Gastrocnemius medialis (tissue), 4 donors: ENCODE measurements at regions of chr6 and their contacts with region 1.

Region 1: DNA sequence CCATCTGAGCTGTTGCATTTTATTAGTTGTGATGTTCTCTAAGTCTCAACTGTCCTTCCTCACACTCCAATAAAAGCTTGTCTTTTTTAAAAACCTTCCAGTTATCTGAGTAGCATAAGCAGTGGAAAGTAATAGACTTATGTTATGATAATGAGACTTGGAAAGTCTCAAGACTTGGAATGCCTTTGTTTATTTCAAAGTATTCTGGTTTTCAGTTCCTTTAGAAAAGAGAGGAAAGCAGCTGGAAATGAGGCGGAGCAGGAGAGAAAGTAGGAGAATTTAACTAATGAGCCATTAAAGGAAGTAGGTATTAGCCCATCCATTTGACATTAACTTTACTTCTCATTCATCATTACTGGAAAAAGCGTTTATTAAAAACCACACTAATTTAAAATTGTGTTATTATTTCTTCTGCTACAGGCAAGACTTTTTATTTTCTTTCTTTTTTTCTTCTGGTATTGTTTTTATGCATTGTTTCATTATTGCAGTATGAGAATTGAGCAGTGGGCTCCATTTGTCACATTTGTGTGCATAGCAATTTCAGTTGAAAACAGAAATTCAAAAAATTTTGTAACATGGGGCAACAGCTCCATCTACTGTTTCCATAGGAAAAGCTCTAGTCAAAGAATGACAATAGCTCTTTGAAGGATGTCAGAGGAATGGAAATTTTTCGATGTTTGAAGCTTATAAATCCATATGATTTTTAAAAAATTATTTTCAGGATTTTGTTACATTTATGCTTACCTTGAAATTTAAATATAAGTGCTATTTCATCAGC is 194.8 kb downstream of the COL9A1 start:
- DNase-seq: no peak
- ATAC-seq: no peak
- H3K4me3 ChIP-seq: no peak overlapping the region
- H3K27ac ChIP-seq: no peak overlapping the region
- H3K4me1 ChIP-seq: no peaks in the 10 kb centered on the region
- H3K27me3 ChIP-seq: no peaks in the 10 kb centered on the region
- CTCF ChIP-seq: peak in 4 of 5 experiments; percentile 21 to 65 (median 54)
- POLR2A ChIP-seq: no peak

Region 2: GRCh38 chr6:69719602-69720193 is 388.3 kb before region 1 on chr6:
- in situ Hi-C with region 1: loop called in 1 of 4 experiments (anchors 25 kb)
- intact Hi-C with region 1: no loop called
- DNase-seq: no peak
- ATAC-seq: no peak
- H3K4me3 ChIP-seq: no peak overlapping the region
- H3K27ac ChIP-seq: no peak overlapping the region
- H3K4me1 ChIP-seq: no peaks in the 10 kb centered on the region
- H3K27me3 ChIP-seq: no peaks in the 10 kb centered on the region
- CTCF ChIP-seq: no peak
- POLR2A ChIP-seq: no peak

Region 3: DNA sequence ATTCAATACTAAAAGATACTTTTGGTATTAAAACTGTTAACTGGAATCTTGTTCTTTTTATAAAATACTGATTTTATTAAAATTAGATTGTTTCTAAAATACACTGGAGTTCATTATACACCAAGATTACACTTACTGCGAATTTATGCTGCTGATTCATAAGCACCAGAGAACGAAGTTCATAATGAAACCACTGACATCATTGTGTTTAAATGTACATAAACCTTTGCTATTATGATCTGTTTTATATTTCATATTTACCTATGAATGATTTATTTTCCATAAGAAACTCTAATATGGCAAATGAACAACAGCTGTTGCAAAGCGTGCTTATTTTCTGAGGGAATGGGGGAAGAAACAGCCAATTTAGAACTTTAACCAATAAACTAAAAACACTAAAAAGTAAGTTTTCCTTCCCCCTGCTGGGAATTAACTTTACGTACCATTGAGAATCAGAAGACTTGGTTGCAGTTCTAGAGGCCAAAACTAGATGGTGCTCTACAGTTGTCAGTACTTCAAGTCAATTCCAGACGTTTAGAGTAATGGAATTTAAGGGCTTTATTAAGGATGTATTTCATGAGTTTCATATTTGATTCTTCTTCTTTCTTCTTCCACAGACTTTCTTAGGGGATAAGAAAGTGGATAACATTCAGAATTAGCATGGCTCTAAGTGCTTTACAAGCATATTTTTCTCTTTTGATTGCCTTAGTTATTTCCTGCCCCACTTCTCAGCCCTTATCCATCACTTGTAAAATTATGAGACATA is 272.4 kb before region 1 on chr6:
- in situ Hi-C with region 1: loop called (anchors 5 to 25 kb)
- intact Hi-C with region 1: loop called (anchors 1 kb)
- DNase-seq: no peak
- ATAC-seq: peak; percentile 72 to 73
- H3K4me3 ChIP-seq: no peak overlapping the region
- H3K27ac ChIP-seq: no peak overlapping the region
- H3K4me1 ChIP-seq: peaks cover 0 to 5% of the 10 kb centered on the region in 2 donors
- H3K27me3 ChIP-seq: no peaks in the 10 kb centered on the region
- CTCF ChIP-seq: peak; percentile 35 to 80 (median 50)
- POLR2A ChIP-seq: no peak

Region 4: GRCh38 chr6:69985180-69985579 is 122.9 kb before region 1 on chr6:
- in situ Hi-C with region 1: no loop called
- intact Hi-C with region 1: no loop called
- DNase-seq: no peak
- ATAC-seq: no peak
- H3K4me3 ChIP-seq: no peak overlapping the region
- H3K27ac ChIP-seq: no peak overlapping the region
- H3K4me1 ChIP-seq: no peaks in the 10 kb centered on the region
- H3K27me3 ChIP-seq: no peaks in the 10 kb centered on the region
- CTCF ChIP-seq: no peak
- POLR2A ChIP-seq: no peak

Region 5: GRCh38 chr6:70151616-70152015 is 43.6 kb after region 1 on chr6:
- in situ Hi-C with region 1: no loop called
- intact Hi-C with region 1: loop called (anchors 1 kb)
- DNase-seq: peak; percentile 6 to 22
- ATAC-seq: peak; percentile 99
- H3K4me3 ChIP-seq: no peak overlapping the region
- H3K27ac ChIP-seq: peak overlapping the region in 2 of 4 donors; percentile 34 to 39
- H3K4me1 ChIP-seq: peaks cover 12 to 15% of the 10 kb centered on the region in 2 donors
- H3K27me3 ChIP-seq: no peaks in the 10 kb centered on the region
- CTCF ChIP-seq: no peak
- POLR2A ChIP-seq: no peak

Region 6: GRCh38 chr6:70166088-70166958 is 58.3 kb after region 1 on chr6:
- in situ Hi-C with region 1: loop called in 1 of 4 experiments (anchors 10 kb)
- intact Hi-C with region 1: loop called (anchors 5 kb)
- DNase-seq: peak; percentile 11 to 23
- ATAC-seq: peak; percentile 75 to 77
- H3K4me3 ChIP-seq: no peak overlapping the region
- H3K27ac ChIP-seq: no peak overlapping the region
- H3K4me1 ChIP-seq: no peaks in the 10 kb centered on the region
- H3K27me3 ChIP-seq: peaks cover 0 to 3% (median 0%) of the 10 kb centered on the region in 3 donors
- CTCF ChIP-seq: peak; percentile 22 to 65 (median 48)
- POLR2A ChIP-seq: no peak

Region 7: DNA sequence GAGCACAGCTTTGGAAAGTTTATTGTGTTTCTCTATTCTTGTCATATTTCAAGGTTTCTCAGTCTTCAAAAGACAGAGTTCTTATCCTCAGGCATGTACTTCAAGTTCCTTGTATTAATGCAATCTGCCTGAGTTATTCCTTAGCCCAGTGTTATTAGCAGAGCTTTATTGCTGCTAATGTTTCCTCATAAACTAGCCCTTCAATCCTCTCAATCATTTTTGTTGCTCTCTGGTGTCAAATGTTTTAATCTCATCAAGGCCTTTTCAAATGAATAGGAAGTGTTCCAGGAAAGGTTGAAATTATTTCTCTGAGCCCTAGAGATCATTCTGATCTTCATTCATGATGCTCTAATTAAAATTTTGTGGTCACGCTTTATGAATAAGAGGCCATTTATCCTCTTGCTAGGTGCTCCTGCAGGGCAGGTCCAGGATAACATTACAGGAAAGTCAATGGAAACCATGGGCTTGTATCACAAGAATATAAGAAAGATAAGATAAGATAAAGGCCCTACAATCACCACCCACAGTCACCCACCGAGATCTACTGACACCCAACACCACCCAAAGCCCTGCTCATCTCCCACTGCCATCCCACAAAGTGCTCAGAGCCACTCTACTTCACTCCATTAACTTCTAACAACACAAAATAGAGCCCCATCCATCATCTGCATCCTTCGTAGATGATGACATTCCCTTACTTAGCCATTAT is 69.0 kb after region 1 on chr6:
- in situ Hi-C with region 1: no loop called
- intact Hi-C with region 1: no loop called
- DNase-seq: no peak
- ATAC-seq: no peak
- H3K4me3 ChIP-seq: no peak overlapping the region
- H3K27ac ChIP-seq: no peak overlapping the region
- H3K4me1 ChIP-seq: no peaks in the 10 kb centered on the region
- H3K27me3 ChIP-seq: no peaks in the 10 kb centered on the region
- CTCF ChIP-seq: no peak
- POLR2A ChIP-seq: no peak

Region 8: DNA sequence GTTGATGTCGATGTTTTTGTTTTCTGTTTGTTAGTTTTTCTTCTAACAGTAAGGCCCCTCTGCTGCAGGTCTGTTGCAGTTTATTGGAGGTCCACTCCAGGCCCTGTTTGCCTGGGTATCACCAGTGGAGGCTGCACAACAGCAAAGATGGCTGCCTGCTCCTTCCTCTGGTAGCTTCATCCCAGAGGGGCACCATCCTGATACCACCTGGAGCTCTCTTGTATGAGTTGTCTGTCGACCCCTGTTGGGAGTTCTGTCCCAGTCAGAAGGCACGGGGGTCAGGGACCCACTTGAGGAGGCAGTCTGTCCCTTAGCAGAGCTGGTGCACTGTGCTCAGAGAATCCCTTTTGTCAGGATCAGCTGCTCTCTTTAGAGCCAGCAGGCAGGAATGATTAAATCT is 392.6 kb after region 1 on chr6:
- in situ Hi-C with region 1: no loop called
- intact Hi-C with region 1: no loop called
- DNase-seq: no peak
- ATAC-seq: no peak
- H3K4me3 ChIP-seq: no peak overlapping the region
- H3K27ac ChIP-seq: no peak overlapping the region
- H3K4me1 ChIP-seq: no peaks in the 10 kb centered on the region
- H3K27me3 ChIP-seq: no peaks in the 10 kb centered on the region
- CTCF ChIP-seq: no peak
- POLR2A ChIP-seq: no peak